CD14-positive monocyte (primary cell): ENCODE measurements at regions of chr12 and their contacts with region 1.

Region 1: GRCh38 chr12:125072496-125072895 is 7.3 kb downstream of the AACS start:
- DNase-seq: no peak
- H3K4me3 ChIP-seq: no peak overlapping the region
- H3K4me3 Mint-ChIP-seq: no peak overlapping the region
- H3K27ac ChIP-seq: no peak overlapping the region
- H3K27ac Mint-ChIP-seq: no peak overlapping the region
- H3K4me1 ChIP-seq: no peaks in the 10 kb centered on the region
- H3K4me1 Mint-ChIP-seq: no peaks in the 10 kb centered on the region
- H3K27me3 ChIP-seq: no peaks in the 10 kb centered on the region
- H3K27me3 Mint-ChIP-seq: no peaks in the 10 kb centered on the region
- CTCF ChIP-seq: no peak

Region 2: GRCh38 chr12:125024949-125025563 is 47.4 kb before region 1 on chr12:
- intact Hi-C with region 1: loop called in 1 of 2 experiments (anchors 2 kb)
- DNase-seq: no peak
- H3K4me3 ChIP-seq: no peak overlapping the region
- H3K4me3 Mint-ChIP-seq: no peak overlapping the region
- H3K27ac ChIP-seq: no peak overlapping the region
- H3K27ac Mint-ChIP-seq: peak overlapping the region in 3 of 7 donors; percentile 18 to 54 (median 50)
- H3K4me1 ChIP-seq: no peaks in the 10 kb centered on the region
- H3K4me1 Mint-ChIP-seq: peaks cover 3% of the 10 kb centered on the region
- H3K27me3 ChIP-seq: no peaks in the 10 kb centered on the region
- H3K27me3 Mint-ChIP-seq: no peaks in the 10 kb centered on the region
- CTCF ChIP-seq: no peak

Region 3: GRCh38 chr12:125178222-125178621 is 105.7 kb after region 1 on chr12:
- intact Hi-C with region 1: no loop called
- DNase-seq: no peak
- H3K4me3 ChIP-seq: no peak overlapping the region
- H3K4me3 Mint-ChIP-seq: no peak overlapping the region
- H3K27ac ChIP-seq: no peak overlapping the region
- H3K27ac Mint-ChIP-seq: no peak overlapping the region
- H3K4me1 ChIP-seq: no peaks in the 10 kb centered on the region
- H3K4me1 Mint-ChIP-seq: peaks cover 4% of the 10 kb centered on the region
- H3K27me3 ChIP-seq: peaks cover 0 to 4% of the 10 kb centered on the region in 2 donors
- H3K27me3 Mint-ChIP-seq: peaks cover 8 to 28% (median 11%) of the 10 kb centered on the region in 3 donors
- CTCF ChIP-seq: no peak